ENCODE measurements at regions of chr12 and their contacts with region 1.

Region 1: DNA sequence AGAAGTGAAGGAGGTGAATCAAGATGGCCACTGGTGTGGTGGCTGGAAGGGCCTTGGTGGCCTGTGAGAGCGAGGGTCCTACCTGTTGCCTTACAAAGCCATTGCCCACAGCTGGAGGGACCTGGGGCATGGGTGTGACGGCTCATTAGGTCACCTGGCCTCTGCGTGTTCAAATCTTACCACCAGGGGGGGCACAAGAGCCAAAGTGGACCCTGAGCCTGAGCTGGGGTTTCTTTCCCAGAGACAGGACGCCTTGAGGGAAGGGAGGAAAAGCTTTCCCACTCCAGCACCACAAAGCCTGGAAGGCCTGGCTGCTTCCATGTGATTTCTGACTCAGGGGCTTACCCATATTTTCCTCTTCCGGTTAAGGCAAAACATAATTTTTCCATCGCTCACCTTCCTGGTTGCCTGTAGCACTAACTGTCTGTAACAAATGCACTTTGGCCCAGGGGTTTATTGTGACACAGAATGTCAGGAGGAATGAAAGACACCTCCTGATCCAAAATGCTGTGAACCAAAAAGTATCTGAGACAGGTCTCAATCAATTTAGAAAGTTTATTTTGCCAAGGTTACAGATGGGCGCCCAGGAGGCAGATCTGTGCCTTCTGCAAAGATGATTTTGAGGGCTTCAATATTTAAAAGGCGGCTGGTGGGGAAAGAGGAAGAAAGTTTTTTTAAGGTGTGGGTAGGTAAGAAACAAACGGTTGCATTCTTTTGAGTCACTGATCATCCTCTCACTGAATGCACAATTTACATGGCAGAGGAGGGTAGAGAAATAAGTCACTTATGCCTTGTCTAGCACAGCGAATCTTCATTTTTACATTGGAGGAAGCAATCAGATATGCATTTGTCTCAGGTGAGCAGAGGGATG is 4.3 kb upstream of the CD9 start:
- DNase-seq: peak; percentile 87
- ATAC-seq: peak; percentile 75
- H3K4me3 Mint-ChIP-seq: no peak overlapping the region
- H3K27ac Mint-ChIP-seq: no peak overlapping the region
- H3K4me1 Mint-ChIP-seq: peaks cover 18% of the 10 kb centered on the region
- H3K27me3 Mint-ChIP-seq: peaks cover 11% of the 10 kb centered on the region

Region 2: GRCh38 chr12:5988659-5989116 is 207.2 kb before region 1 on chr12:
- CTCF ChIA-PET with region 1: interaction called, 9 read pairs
- POLR2A ChIA-PET with region 1: no interaction called
- intact Hi-C with region 1: loop called in 1 of 2 experiments (anchors 5 kb)
- DNase-seq: peak; percentile 89
- ATAC-seq: peak; percentile 97
- H3K4me3 Mint-ChIP-seq: no peak overlapping the region
- H3K27ac Mint-ChIP-seq: no peak overlapping the region
- H3K4me1 Mint-ChIP-seq: no peaks in the 10 kb centered on the region
- H3K27me3 Mint-ChIP-seq: no peaks in the 10 kb centered on the region

Region 3: GRCh38 chr12:6104027-6104426 is 91.9 kb before region 1 on chr12:
- CTCF ChIA-PET with region 1: no interaction called
- POLR2A ChIA-PET with region 1: no interaction called
- intact Hi-C with region 1: no loop called
- DNase-seq: no peak
- ATAC-seq: no peak
- H3K4me3 Mint-ChIP-seq: no peak overlapping the region
- H3K27ac Mint-ChIP-seq: no peak overlapping the region
- H3K4me1 Mint-ChIP-seq: no peaks in the 10 kb centered on the region
- H3K27me3 Mint-ChIP-seq: no peaks in the 10 kb centered on the region

Region 4: GRCh38 chr12:6140651-6141447 is 55.1 kb before region 1 on chr12:
- CTCF ChIA-PET with region 1: interaction called, 11 read pairs
- POLR2A ChIA-PET with region 1: no interaction called
- intact Hi-C with region 1: no loop called
- DNase-seq: peak; percentile 58
- ATAC-seq: peak; percentile 77
- H3K4me3 Mint-ChIP-seq: peak overlapping the region; percentile 28
- H3K27ac Mint-ChIP-seq: peak overlapping the region; percentile 93
- H3K4me1 Mint-ChIP-seq: peaks cover 48% of the 10 kb centered on the region
- H3K27me3 Mint-ChIP-seq: no peaks in the 10 kb centered on the region

Region 5: DNA sequence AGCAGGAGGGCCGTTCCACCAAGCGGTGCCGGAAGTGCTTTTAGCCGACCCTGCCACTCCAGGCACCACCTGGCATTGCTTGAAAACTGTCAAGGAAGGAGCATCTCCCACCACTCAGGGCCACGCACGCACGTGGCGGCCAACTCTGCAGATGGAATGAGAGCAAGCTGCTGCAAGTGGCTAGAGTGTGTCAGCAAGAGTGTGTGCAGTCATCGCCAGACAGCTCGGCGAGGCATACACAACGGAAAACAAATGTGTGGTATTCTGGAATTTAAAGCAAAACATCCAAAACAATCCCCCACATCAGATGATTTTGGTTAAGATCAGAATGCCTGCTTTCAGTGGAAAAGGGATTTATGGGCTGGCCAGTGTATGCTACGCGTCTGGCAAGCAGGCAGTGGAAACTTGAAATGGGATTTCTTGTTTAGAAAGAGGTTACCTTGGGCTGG is 15.5 kb after region 1 on chr12:
- CTCF ChIA-PET with region 1: interaction called, 11 read pairs
- POLR2A ChIA-PET with region 1: no interaction called
- intact Hi-C with region 1: no loop called
- DNase-seq: no peak
- ATAC-seq: no peak
- H3K4me3 Mint-ChIP-seq: no peak overlapping the region
- H3K27ac Mint-ChIP-seq: no peak overlapping the region
- H3K4me1 Mint-ChIP-seq: peaks cover 8% of the 10 kb centered on the region
- H3K27me3 Mint-ChIP-seq: no peaks in the 10 kb centered on the region

Region 6: GRCh38 chr12:6278439-6279255 is 82.7 kb after region 1 on chr12:
- CTCF ChIA-PET with region 1: interaction called, 127 read pairs
- POLR2A ChIA-PET with region 1: interaction called, 3 read pairs
- intact Hi-C with region 1: loop called (anchors 1 kb)
- DNase-seq: peak; percentile 91
- ATAC-seq: peak; percentile 94
- H3K4me3 Mint-ChIP-seq: peak overlapping the region; percentile 69
- H3K27ac Mint-ChIP-seq: peak overlapping the region; percentile 78
- H3K4me1 Mint-ChIP-seq: peaks cover 5% of the 10 kb centered on the region
- H3K27me3 Mint-ChIP-seq: peaks cover 9% of the 10 kb centered on the region

Region 7: GRCh38 chr12:6470375-6471163 is 274.7 kb after region 1 on chr12 and contains the start of gene VAMP1:
- CTCF ChIA-PET with region 1: no interaction called
- POLR2A ChIA-PET with region 1: no interaction called
- intact Hi-C with region 1: no loop called
- DNase-seq: peak; percentile 99
- ATAC-seq: peak; percentile 91
- H3K4me3 Mint-ChIP-seq: peak within 1 kb of the TSS; percentile 91
- H3K27ac Mint-ChIP-seq: peak within 1 kb of the TSS; percentile 82
- H3K4me1 Mint-ChIP-seq: peaks cover 52% of the 10 kb centered on the region
- H3K27me3 Mint-ChIP-seq: no peaks in the 10 kb centered on the region
- total RNA-seq, gene VAMP1: 34.5 to 52.3 TPM